ENCODE measurements at regions of chr2 and their contacts with region 1.

Region 1: DNA sequence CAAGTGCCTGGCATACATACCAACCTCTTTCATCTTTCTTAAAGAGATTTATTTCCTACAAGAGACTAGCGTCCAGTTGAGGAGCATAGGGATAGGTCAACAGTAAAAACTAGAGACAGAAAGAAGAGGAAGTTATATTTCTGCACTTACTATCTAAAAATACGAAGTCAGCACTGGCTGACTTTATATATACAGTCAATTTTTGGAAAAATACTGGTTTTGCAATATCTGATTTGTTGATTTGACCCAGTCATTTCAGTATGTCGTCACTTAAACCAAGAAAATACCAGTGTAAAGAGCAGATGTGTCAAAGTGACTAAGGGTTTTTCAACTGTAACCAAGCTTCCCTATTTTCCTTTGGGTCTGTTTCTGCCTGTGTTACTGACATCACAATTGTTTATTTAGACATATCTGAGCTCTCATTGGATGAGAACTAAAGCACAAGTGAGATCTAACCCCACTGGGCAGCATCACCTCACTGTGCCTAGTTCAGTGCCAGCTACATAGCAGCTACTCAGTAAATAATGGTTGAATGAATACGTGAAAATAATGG is 23.0 kb downstream of the CYTIP start:
- DNase-seq: no peak
- ATAC-seq: peak; percentile 63
- H3K4me3 Mint-ChIP-seq: peak overlapping the region; percentile 31
- H3K27ac Mint-ChIP-seq: peak overlapping the region; percentile 87
- H3K4me1 Mint-ChIP-seq: peaks cover 78% of the 10 kb centered on the region
- H3K27me3 Mint-ChIP-seq: no peaks in the 10 kb centered on the region

Region 2: GRCh38 chr2:157433394-157433793 is 12.5 kb after region 1 on chr2:
- CTCF ChIA-PET with region 1: interaction called, 21 read pairs
- DNase-seq: no peak
- ATAC-seq: peak; percentile 10
- H3K4me3 Mint-ChIP-seq: peak overlapping the region; percentile 100
- H3K27ac Mint-ChIP-seq: peak overlapping the region; percentile 84
- H3K4me1 Mint-ChIP-seq: peaks cover 83% of the 10 kb centered on the region
- H3K27me3 Mint-ChIP-seq: no peaks in the 10 kb centered on the region

Region 3: DNA sequence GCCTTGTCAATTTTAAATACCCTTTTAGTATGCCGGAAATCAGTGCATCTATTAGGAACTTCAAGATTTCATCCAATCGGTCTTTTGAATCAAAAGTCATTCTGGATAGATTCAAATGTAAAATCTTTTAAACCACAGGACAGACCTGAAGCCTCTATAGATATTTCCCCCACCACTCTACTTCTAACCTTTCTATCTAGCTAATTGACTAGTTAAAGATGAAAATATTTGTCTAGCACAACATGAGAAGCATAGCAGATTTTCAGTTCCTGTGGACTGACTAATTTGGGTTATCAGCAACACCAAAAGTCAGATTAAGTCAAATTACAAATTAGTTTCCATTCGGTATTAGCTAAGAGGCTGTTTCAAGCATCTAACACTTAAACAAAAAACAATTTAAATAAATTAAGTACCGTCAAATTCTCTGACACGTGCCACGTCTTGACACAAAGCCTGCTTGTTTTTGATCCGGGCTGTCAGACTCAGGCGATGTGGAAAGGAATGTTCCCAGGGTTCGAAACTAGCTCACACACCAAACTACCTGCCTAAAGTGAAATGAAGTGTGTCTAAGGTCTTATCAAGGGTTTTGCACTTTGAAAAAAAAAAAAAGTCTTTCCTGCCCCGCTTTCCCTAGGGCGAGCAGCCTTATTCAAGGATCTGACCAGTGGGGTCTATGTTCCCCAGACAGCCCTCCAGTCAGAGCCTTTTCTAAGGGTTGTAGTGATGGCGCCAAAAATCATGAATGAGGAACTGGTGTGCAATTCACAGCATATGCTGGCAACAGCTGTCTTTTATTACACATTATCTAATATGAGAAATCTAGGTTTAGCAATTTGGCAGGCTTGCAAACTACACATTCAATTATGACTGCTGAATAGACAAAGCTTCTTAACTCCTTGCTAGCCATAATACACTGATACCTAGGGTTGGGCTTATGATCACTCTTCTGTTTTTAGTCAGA is 18.3 kb after region 1 on chr2:
- CTCF ChIA-PET with region 1: interaction called, 21 read pairs
- DNase-seq: no peak
- ATAC-seq: peak; percentile 8
- H3K4me3 Mint-ChIP-seq: peak overlapping the region; percentile 100
- H3K27ac Mint-ChIP-seq: peak overlapping the region; percentile 98
- H3K4me1 Mint-ChIP-seq: peaks cover 29% of the 10 kb centered on the region
- H3K27me3 Mint-ChIP-seq: no peaks in the 10 kb centered on the region

Region 4: DNA sequence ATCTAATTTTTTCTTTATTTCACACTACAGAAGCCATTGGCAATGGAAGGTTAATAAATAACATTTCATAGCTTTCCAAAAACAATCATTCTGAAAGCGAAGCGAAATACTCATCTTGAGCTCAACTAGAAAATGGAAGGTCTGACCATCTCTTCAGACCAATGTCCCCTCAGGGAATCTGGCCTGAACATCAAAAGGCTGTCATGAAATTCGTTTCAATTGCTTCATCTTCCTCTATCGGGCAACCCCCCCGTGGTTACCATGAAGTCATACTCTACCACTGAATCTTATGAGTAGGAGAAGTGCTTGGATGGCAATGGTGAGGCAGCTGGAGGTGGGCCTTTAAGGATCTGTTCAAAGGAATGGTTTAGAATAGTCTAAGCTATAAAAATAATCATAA is 45.9 kb after region 1 on chr2:
- CTCF ChIA-PET with region 1: no interaction called
- DNase-seq: no peak
- ATAC-seq: no peak
- H3K4me3 Mint-ChIP-seq: no peak overlapping the region
- H3K27ac Mint-ChIP-seq: peak overlapping the region; percentile 72
- H3K4me1 Mint-ChIP-seq: peaks cover 93% of the 10 kb centered on the region
- H3K27me3 Mint-ChIP-seq: no peaks in the 10 kb centered on the region